ENCODE measurements at regions of chr18 and their contacts with region 1.

Region 1: DNA sequence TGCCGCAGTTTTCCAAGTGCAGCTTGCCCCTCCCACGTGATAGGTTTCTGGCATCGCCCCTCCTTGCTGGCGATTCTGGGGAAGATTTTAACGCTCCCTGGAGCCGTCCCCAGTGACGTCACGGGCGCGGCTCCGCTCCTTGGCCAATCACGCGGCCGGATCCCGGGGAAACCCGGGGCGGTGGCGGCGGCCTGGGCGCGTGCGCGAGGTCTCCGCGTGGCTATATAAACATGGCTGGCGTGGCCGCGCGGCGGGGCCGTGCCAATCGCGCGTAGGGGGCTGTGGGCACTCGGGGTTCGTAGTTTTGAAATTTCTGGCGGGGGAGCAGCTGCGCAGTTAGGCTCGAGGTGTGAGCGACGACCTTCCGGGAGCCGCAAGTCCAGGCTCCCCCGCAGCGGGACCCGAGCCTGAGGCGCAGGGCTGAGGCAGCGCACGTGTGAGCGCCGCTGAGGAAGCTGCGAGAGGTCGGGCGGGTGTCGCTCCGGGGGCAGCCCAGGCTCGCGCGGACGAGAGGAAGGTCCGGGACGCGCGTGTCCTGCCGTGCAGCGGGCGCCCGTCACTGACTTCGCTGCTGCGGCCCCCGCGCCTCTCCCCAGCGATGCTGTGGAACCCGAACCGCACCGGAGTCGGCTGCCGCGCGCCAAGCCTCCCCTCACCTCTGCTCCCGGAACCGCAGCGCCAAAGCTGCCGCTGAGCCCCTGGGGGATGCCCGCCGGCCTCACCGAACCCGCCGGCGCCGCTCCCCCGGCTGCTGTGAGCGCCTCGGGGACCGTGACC is at the start of gene TAF4B:
- DNase-seq: peak; percentile 87 to 98 (median 92)
- ATAC-seq: peak; percentile 95
- H3K4me3 ChIP-seq: peak within 1 kb of the TSS; percentile 58
- H3K4me3 Mint-ChIP-seq: peak within 1 kb of the TSS; percentile 90 to 97 (median 96)
- H3K27ac ChIP-seq: peak within 1 kb of the TSS; percentile 86
- H3K27ac Mint-ChIP-seq: peak within 1 kb of the TSS; percentile 87 to 99 (median 98)
- H3K4me1 ChIP-seq: peaks cover 5 to 20% of the 10 kb centered on the region in 2 donors
- H3K4me1 Mint-ChIP-seq: peaks cover 18 to 48% (median 36%) of the 10 kb centered on the region in 7 donors
- H3K27me3 ChIP-seq: no peaks in the 10 kb centered on the region
- H3K27me3 Mint-ChIP-seq: peaks cover 0 to 5% (median 0%) of the 10 kb centered on the region in 5 donors
- total RNA-seq, gene TAF4B: 12.0 to 15.7 (median 12.6) TPM

Region 2: DNA sequence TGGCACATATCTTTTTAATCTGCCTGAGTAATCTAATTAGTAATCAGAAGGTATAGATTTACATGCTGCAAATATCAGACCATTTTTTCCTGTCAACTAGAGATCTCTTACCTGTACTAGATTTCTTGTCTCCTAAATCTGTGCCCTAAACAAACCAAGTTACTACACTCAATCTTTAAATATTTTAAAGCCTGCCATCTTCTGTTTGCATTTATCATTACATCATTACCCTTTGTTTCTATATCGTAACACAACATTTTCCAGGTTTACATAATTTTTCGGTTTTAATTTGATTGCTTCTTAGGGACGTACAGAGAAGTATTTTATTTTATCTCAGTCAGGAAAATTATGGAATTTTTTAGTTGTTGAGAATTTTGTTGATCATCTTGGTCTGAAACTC is 67.1 kb before region 1 on chr18:
- CTCF ChIA-PET with region 1: no interaction called
- POLR2A ChIA-PET with region 1: no interaction called
- intact Hi-C with region 1: loop called in 1 of 2 experiments (anchors 2 kb)
- DNase-seq: peak in 5 of 9 donors; percentile 7 to 37 (median 17)
- ATAC-seq: no peak
- H3K4me3 ChIP-seq: no peak overlapping the region
- H3K4me3 Mint-ChIP-seq: peak overlapping the region in 1 of 10 donors; percentile 2
- H3K27ac ChIP-seq: no peak overlapping the region
- H3K27ac Mint-ChIP-seq: no peak overlapping the region
- H3K4me1 ChIP-seq: no peaks in the 10 kb centered on the region
- H3K4me1 Mint-ChIP-seq: peaks cover 0 to 7% (median 2%) of the 10 kb centered on the region in 7 donors
- H3K27me3 ChIP-seq: no peaks in the 10 kb centered on the region
- H3K27me3 Mint-ChIP-seq: peaks cover 0 to 8% (median 0%) of the 10 kb centered on the region in 5 donors

Region 3: GRCh38 chr18:26190506-26190905 is 35.9 kb before region 1 on chr18:
- CTCF ChIA-PET with region 1: no interaction called
- POLR2A ChIA-PET with region 1: interaction called, 6 read pairs
- intact Hi-C with region 1: loop called (anchors 1 kb)
- DNase-seq: peak in 8 of 9 donors; percentile 22 to 61 (median 48)
- ATAC-seq: peak; percentile 85
- H3K4me3 ChIP-seq: peak overlapping the region; percentile 26
- H3K4me3 Mint-ChIP-seq: peak overlapping the region; percentile 74 to 88 (median 83)
- H3K27ac ChIP-seq: peak overlapping the region; percentile 63
- H3K27ac Mint-ChIP-seq: peak overlapping the region; percentile 87 to 93 (median 92)
- H3K4me1 ChIP-seq: no peaks in the 10 kb centered on the region
- H3K4me1 Mint-ChIP-seq: peaks cover 5 to 34% (median 28%) of the 10 kb centered on the region in 7 donors
- H3K27me3 ChIP-seq: no peaks in the 10 kb centered on the region
- H3K27me3 Mint-ChIP-seq: no peaks in the 10 kb centered on the region

Region 4: DNA sequence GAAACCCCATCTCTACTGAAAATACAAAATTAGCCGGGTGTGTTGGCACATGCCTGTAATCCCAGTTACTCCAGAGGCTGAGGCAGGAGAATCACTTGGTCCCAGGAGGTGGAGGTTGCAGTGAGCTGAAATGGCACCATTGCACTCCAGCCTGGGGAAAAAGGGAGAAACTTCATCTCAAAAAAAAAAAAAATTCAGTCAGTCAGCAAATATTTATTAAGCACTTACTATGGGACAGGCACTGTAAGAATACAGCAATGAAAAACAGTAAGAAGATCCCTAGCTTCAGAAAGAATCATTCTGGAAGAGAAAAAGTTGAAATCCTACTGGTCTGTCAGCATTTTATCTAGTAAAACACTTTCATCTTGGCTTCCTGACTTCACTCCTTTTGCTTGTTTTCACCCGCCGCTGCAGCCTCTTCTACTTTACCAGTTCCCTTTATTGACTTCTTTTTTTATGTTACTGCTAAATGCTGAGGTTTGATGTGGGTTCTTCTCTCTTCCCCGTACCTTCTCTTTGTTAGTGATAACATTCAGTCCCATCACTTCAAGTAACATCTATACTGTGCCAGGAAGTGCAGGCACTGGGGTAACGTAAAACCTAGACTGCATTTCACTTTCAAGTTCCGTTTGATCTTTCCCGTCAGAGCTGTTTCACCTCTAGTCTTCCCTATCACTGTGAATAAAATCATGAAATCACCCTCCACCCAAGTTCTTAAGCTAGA is 11.0 kb before region 1 on chr18:
- CTCF ChIA-PET with region 1: interaction called, 7 read pairs
- POLR2A ChIA-PET with region 1: interaction called, 25 read pairs
- intact Hi-C with region 1: loop called (anchors 1 kb)
- DNase-seq: peak in 8 of 9 donors; percentile 25 to 93 (median 87)
- ATAC-seq: peak; percentile 98
- H3K4me3 ChIP-seq: no peak overlapping the region
- H3K4me3 Mint-ChIP-seq: peak overlapping the region; percentile 29 to 82 (median 60)
- H3K27ac ChIP-seq: peak overlapping the region; percentile 58
- H3K27ac Mint-ChIP-seq: peak overlapping the region; percentile 80 to 98 (median 91)
- H3K4me1 ChIP-seq: peaks cover 11 to 18% of the 10 kb centered on the region in 2 donors
- H3K4me1 Mint-ChIP-seq: peaks cover 19 to 50% (median 30%) of the 10 kb centered on the region in 7 donors
- H3K27me3 ChIP-seq: no peaks in the 10 kb centered on the region
- H3K27me3 Mint-ChIP-seq: no peaks in the 10 kb centered on the region

Region 5: GRCh38 chr18:26548429-26549262 is 322.2 kb after region 1 on chr18 and contains the start of gene KCTD1:
- CTCF ChIA-PET with region 1: no interaction called
- POLR2A ChIA-PET with region 1: no interaction called
- intact Hi-C with region 1: loop called in 1 of 2 experiments (anchors 10 kb)
- DNase-seq: peak in 8 of 9 donors; percentile 26 to 73 (median 52)
- ATAC-seq: peak; percentile 70
- H3K4me3 ChIP-seq: peak within 1 kb of the TSS; percentile 53
- H3K4me3 Mint-ChIP-seq: peak within 1 kb of the TSS; percentile 75 to 92 (median 86)
- H3K27ac ChIP-seq: no peak within 1 kb of the TSS
- H3K27ac Mint-ChIP-seq: peak within 1 kb of the TSS in 1 of 9 donors; percentile 82
- H3K4me1 ChIP-seq: peaks cover 0 to 4% of the 10 kb centered on the region in 2 donors
- H3K4me1 Mint-ChIP-seq: peaks cover 12 to 50% (median 42%) of the 10 kb centered on the region in 7 donors
- H3K27me3 ChIP-seq: peaks cover 7 to 10% of the 10 kb centered on the region in 2 donors
- H3K27me3 Mint-ChIP-seq: peaks cover 26 to 45% (median 33%) of the 10 kb centered on the region in 5 donors
- total RNA-seq, gene KCTD1: 2.1 to 4.5 (median 2.6) TPM